CD4-positive, alpha-beta T cell (primary cell): ENCODE measurements at regions of chr4 and their contacts with region 1.

Region 1: GRCh38 chr4:15805583-15806517 is 27.7 kb downstream of the CD38 start:
- DNase-seq: peak in 10 of 14 experiments; percentile 10 to 76 (median 33)
- ATAC-seq: peak; percentile 84
- H3K4me3 ChIP-seq: no peak overlapping the region
- H3K4me3 Mint-ChIP-seq: no peak overlapping the region
- H3K27ac ChIP-seq: no peak overlapping the region
- H3K27ac Mint-ChIP-seq: peak overlapping the region; percentile 18
- H3K4me1 ChIP-seq: peaks cover 9% of the 10 kb centered on the region
- H3K4me1 Mint-ChIP-seq: peaks cover 31% of the 10 kb centered on the region
- H3K27me3 ChIP-seq: no peaks in the 10 kb centered on the region
- H3K27me3 Mint-ChIP-seq: no peaks in the 10 kb centered on the region
- CTCF ChIP-seq: peak; percentile 80

Region 2: GRCh38 chr4:15349531-15349935 is 456.3 kb before region 1 on chr4:
- CTCF ChIA-PET with region 1: no interaction called
- POLR2A ChIA-PET with region 1: no interaction called
- intact Hi-C with region 1: no loop called
- DNase-seq: no peak
- ATAC-seq: no peak
- H3K4me3 ChIP-seq: no peak overlapping the region
- H3K4me3 Mint-ChIP-seq: no peak overlapping the region
- H3K27ac ChIP-seq: no peak overlapping the region
- H3K27ac Mint-ChIP-seq: no peak overlapping the region
- H3K4me1 ChIP-seq: no peaks in the 10 kb centered on the region
- H3K4me1 Mint-ChIP-seq: peaks cover 8% of the 10 kb centered on the region
- H3K27me3 ChIP-seq: no peaks in the 10 kb centered on the region
- H3K27me3 Mint-ChIP-seq: no peaks in the 10 kb centered on the region
- CTCF ChIP-seq: no peak

Region 3: GRCh38 chr4:15729910-15730533 is 75.8 kb before region 1 on chr4:
- CTCF ChIA-PET with region 1: interaction called, 10 read pairs
- POLR2A ChIA-PET with region 1: no interaction called
- intact Hi-C with region 1: loop called (anchors 1 to 2 kb)
- DNase-seq: peak in 9 of 14 experiments; percentile 7 to 71 (median 12)
- ATAC-seq: peak; percentile 66
- H3K4me3 ChIP-seq: no peak overlapping the region
- H3K4me3 Mint-ChIP-seq: no peak overlapping the region
- H3K27ac ChIP-seq: no peak overlapping the region
- H3K27ac Mint-ChIP-seq: no peak overlapping the region
- H3K4me1 ChIP-seq: peaks cover 3% of the 10 kb centered on the region
- H3K4me1 Mint-ChIP-seq: peaks cover 14% of the 10 kb centered on the region
- H3K27me3 ChIP-seq: no peaks in the 10 kb centered on the region
- H3K27me3 Mint-ChIP-seq: no peaks in the 10 kb centered on the region
- CTCF ChIP-seq: peak; percentile 95

Region 4: GRCh38 chr4:15756361-15756861 is 49.4 kb before region 1 on chr4:
- CTCF ChIA-PET with region 1: interaction called, 9 read pairs
- POLR2A ChIA-PET with region 1: interaction called, 12 read pairs
- intact Hi-C with region 1: loop called in 1 of 2 experiments (anchors 10 kb)
- DNase-seq: peak; percentile 44 to 93 (median 62)
- ATAC-seq: peak; percentile 81
- H3K4me3 ChIP-seq: peak overlapping the region; percentile 29
- H3K4me3 Mint-ChIP-seq: peak overlapping the region; percentile 73
- H3K27ac ChIP-seq: peak overlapping the region in 1 of 2 donors; percentile 48
- H3K27ac Mint-ChIP-seq: peak overlapping the region; percentile 86
- H3K4me1 ChIP-seq: peaks cover 36% of the 10 kb centered on the region
- H3K4me1 Mint-ChIP-seq: peaks cover 60% of the 10 kb centered on the region
- H3K27me3 ChIP-seq: no peaks in the 10 kb centered on the region
- H3K27me3 Mint-ChIP-seq: no peaks in the 10 kb centered on the region
- CTCF ChIP-seq: peak; percentile 66

Region 5: GRCh38 chr4:15794905-15795304 is 10.9 kb before region 1 on chr4:
- CTCF ChIA-PET with region 1: no interaction called
- POLR2A ChIA-PET with region 1: no interaction called
- intact Hi-C with region 1: no loop called
- DNase-seq: no peak
- ATAC-seq: no peak
- H3K4me3 ChIP-seq: no peak overlapping the region
- H3K4me3 Mint-ChIP-seq: no peak overlapping the region
- H3K27ac ChIP-seq: no peak overlapping the region
- H3K27ac Mint-ChIP-seq: no peak overlapping the region
- H3K4me1 ChIP-seq: no peaks in the 10 kb centered on the region
- H3K4me1 Mint-ChIP-seq: peaks cover 22% of the 10 kb centered on the region
- H3K27me3 ChIP-seq: no peaks in the 10 kb centered on the region
- H3K27me3 Mint-ChIP-seq: no peaks in the 10 kb centered on the region
- CTCF ChIP-seq: no peak

Region 6: GRCh38 chr4:15882675-15883086 is 76.8 kb after region 1 on chr4:
- CTCF ChIA-PET with region 1: interaction called, 8 read pairs
- POLR2A ChIA-PET with region 1: no interaction called
- intact Hi-C with region 1: loop called in 1 of 2 experiments (anchors 2 kb)
- DNase-seq: peak in 13 of 14 experiments; percentile 11 to 75 (median 22)
- ATAC-seq: peak; percentile 64
- H3K4me3 ChIP-seq: no peak overlapping the region
- H3K4me3 Mint-ChIP-seq: no peak overlapping the region
- H3K27ac ChIP-seq: no peak overlapping the region
- H3K27ac Mint-ChIP-seq: no peak overlapping the region
- H3K4me1 ChIP-seq: no peaks in the 10 kb centered on the region
- H3K4me1 Mint-ChIP-seq: no peaks in the 10 kb centered on the region
- H3K27me3 ChIP-seq: no peaks in the 10 kb centered on the region
- H3K27me3 Mint-ChIP-seq: peaks cover 4% of the 10 kb centered on the region
- CTCF ChIP-seq: peak; percentile 76

Region 7: GRCh38 chr4:15956179-15956850 is 150.5 kb after region 1 on chr4:
- CTCF ChIA-PET with region 1: interaction called, 15 read pairs
- POLR2A ChIA-PET with region 1: no interaction called
- intact Hi-C with region 1: loop called (anchors 1 kb)
- DNase-seq: peak; percentile 51 to 83 (median 70)
- ATAC-seq: peak; percentile 96
- H3K4me3 ChIP-seq: no peak overlapping the region
- H3K4me3 Mint-ChIP-seq: no peak overlapping the region
- H3K27ac ChIP-seq: no peak overlapping the region
- H3K27ac Mint-ChIP-seq: no peak overlapping the region
- H3K4me1 ChIP-seq: no peaks in the 10 kb centered on the region
- H3K4me1 Mint-ChIP-seq: no peaks in the 10 kb centered on the region
- H3K27me3 ChIP-seq: no peaks in the 10 kb centered on the region
- H3K27me3 Mint-ChIP-seq: no peaks in the 10 kb centered on the region
- CTCF ChIP-seq: peak; percentile 78

Region 8: DNA sequence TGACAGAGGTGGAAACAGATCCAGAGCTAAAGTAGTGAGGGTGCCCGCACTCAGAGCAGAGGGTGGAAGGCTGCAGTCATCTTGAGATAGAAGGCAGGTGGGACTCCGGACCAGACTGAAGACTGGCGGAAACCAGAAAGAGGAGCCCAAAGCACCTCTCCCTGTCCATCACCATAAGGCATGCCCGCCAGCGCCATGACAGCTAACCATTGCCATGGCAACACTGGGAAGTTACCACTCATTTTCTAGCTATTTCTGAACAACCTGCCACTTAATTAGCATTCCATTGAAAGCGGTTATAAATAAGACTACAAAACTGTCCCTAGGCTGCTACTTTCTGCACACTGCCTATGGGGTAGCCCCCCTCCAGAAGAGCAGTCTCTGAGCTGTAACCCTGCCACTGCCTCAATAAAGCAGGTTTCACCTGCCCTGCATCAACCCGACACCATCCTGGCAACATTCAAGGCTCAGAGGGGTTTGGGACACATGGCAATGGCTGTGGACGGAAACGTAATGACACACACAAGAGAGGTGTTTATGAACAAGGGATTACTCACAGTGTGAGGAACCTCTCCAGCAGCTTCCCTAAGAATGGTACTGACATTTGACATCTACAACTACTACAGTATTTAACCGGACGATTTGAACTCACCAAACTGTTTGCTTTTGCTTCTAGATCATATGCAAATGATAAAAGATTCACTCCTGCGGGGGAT is 184.9 kb after region 1 on chr4:
- CTCF ChIA-PET with region 1: no interaction called
- POLR2A ChIA-PET with region 1: no interaction called
- intact Hi-C with region 1: no loop called
- DNase-seq: no peak
- ATAC-seq: no peak
- H3K4me3 ChIP-seq: no peak overlapping the region
- H3K4me3 Mint-ChIP-seq: no peak overlapping the region
- H3K27ac ChIP-seq: no peak overlapping the region
- H3K27ac Mint-ChIP-seq: no peak overlapping the region
- H3K4me1 ChIP-seq: no peaks in the 10 kb centered on the region
- H3K4me1 Mint-ChIP-seq: no peaks in the 10 kb centered on the region
- H3K27me3 ChIP-seq: no peaks in the 10 kb centered on the region
- H3K27me3 Mint-ChIP-seq: peaks cover 20% of the 10 kb centered on the region
- CTCF ChIP-seq: no peak

Region 9: GRCh38 chr4:16001484-16001858 is 195.6 kb after region 1 on chr4:
- CTCF ChIA-PET with region 1: interaction called, 8 read pairs
- POLR2A ChIA-PET with region 1: no interaction called
- intact Hi-C with region 1: loop called (anchors 1 kb)
- DNase-seq: peak in 13 of 14 experiments; percentile 10 to 76 (median 29)
- ATAC-seq: peak; percentile 86
- H3K4me3 ChIP-seq: no peak overlapping the region
- H3K4me3 Mint-ChIP-seq: no peak overlapping the region
- H3K27ac ChIP-seq: no peak overlapping the region
- H3K27ac Mint-ChIP-seq: no peak overlapping the region
- H3K4me1 ChIP-seq: peaks cover 4% of the 10 kb centered on the region
- H3K4me1 Mint-ChIP-seq: no peaks in the 10 kb centered on the region
- H3K27me3 ChIP-seq: peaks cover 4 to 7% of the 10 kb centered on the region in 2 experiments
- H3K27me3 Mint-ChIP-seq: no peaks in the 10 kb centered on the region
- CTCF ChIP-seq: peak; percentile 69

Region 10: GRCh38 chr4:16264798-16265197 is 458.9 kb after region 1 on chr4:
- CTCF ChIA-PET with region 1: no interaction called
- POLR2A ChIA-PET with region 1: no interaction called
- intact Hi-C with region 1: loop called (anchors 5 to 10 kb)
- DNase-seq: peak in 3 of 14 experiments; percentile 57 to 65 (median 64)
- ATAC-seq: no peak
- H3K4me3 ChIP-seq: no peak overlapping the region
- H3K4me3 Mint-ChIP-seq: no peak overlapping the region
- H3K27ac ChIP-seq: no peak overlapping the region
- H3K27ac Mint-ChIP-seq: no peak overlapping the region
- H3K4me1 ChIP-seq: no peaks in the 10 kb centered on the region
- H3K4me1 Mint-ChIP-seq: peaks cover 12% of the 10 kb centered on the region
- H3K27me3 ChIP-seq: no peaks in the 10 kb centered on the region
- H3K27me3 Mint-ChIP-seq: no peaks in the 10 kb centered on the region
- CTCF ChIP-seq: peak; percentile 69